CD8-positive, alpha-beta T cell (primary cell): ENCODE measurements at regions of chr10 and their contacts with region 1.

Region 1: GRCh38 chr10:68955832-68956532 is at the start of gene DDX21:
- DNase-seq: peak; percentile 68 to 95 (median 89)
- ATAC-seq: peak; percentile 75
- H3K4me3 ChIP-seq: peak within 1 kb of the TSS; percentile 85 to 96
- H3K4me3 Mint-ChIP-seq: peak within 1 kb of the TSS; percentile 100
- H3K27ac ChIP-seq: peak within 1 kb of the TSS; percentile 95 to 99
- H3K27ac Mint-ChIP-seq: peak within 1 kb of the TSS; percentile 100
- H3K4me1 ChIP-seq: peaks cover 21% of the 10 kb centered on the region
- H3K4me1 Mint-ChIP-seq: peaks cover 41% of the 10 kb centered on the region
- H3K27me3 ChIP-seq: no peaks in the 10 kb centered on the region
- H3K27me3 Mint-ChIP-seq: no peaks in the 10 kb centered on the region
- CTCF ChIP-seq: peak; percentile 71
- total RNA-seq, gene DDX21: 175 to 185 TPM

Region 2: DNA sequence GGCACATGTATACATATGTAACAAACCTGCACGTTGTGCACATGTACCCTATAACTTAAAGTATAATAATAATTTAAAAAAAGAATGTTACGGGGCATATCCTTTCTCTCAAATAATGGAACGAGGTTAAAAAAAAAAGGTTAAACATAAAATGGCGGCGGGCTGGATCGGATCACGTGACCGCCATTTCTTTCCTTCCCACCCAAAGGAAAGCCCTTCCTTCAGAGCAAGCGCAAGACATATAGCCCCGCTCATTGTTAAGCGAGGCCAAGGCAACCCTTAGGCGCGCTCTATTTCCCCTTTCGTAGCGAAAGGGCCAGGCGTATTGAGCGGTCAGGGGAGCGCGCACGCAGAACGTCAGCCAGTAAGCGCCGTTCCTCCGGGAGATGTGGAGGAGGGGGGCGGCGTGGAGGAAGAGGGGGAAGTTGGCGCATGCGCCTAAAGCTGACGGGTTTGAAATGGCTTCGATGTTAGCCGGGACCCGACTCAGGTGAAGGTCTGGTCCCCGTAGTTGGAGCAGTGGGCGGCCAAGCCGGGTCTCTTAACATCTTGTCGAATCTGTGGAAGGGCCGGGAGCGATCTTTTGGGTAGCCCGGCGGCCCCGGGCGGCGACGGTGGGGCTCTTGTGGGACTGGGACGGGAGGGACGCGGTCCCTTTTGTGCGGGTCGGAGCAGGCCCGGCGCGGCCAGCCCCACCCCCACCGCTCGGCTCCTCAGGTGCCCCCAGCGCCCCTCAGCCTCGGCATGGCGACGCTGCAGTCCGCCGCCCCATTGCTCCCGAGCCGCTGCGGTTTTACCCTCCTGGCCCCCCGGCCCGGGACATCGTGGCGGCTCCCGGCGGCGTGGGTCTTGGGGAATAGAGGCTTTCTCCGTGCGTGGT is 234.9 kb before region 1 on chr10 and contains the start of gene CCAR1:
- CTCF ChIA-PET with region 1: no interaction called
- POLR2A ChIA-PET with region 1: no interaction called
- intact Hi-C with region 1: loop called (anchors 1 to 2 kb)
- DNase-seq: peak; percentile 92 to 99 (median 97)
- ATAC-seq: peak; percentile 95
- H3K4me3 ChIP-seq: peak within 1 kb of the TSS; percentile 87 to 98
- H3K4me3 Mint-ChIP-seq: peak within 1 kb of the TSS; percentile 100
- H3K27ac ChIP-seq: peak within 1 kb of the TSS; percentile 83 to 95
- H3K27ac Mint-ChIP-seq: peak within 1 kb of the TSS; percentile 99
- H3K4me1 ChIP-seq: peaks cover 10% of the 10 kb centered on the region
- H3K4me1 Mint-ChIP-seq: peaks cover 20% of the 10 kb centered on the region
- H3K27me3 ChIP-seq: no peaks in the 10 kb centered on the region
- H3K27me3 Mint-ChIP-seq: no peaks in the 10 kb centered on the region
- CTCF ChIP-seq: no peak
- total RNA-seq, gene CCAR1: 70.8 to 79.1 TPM

Region 3: DNA sequence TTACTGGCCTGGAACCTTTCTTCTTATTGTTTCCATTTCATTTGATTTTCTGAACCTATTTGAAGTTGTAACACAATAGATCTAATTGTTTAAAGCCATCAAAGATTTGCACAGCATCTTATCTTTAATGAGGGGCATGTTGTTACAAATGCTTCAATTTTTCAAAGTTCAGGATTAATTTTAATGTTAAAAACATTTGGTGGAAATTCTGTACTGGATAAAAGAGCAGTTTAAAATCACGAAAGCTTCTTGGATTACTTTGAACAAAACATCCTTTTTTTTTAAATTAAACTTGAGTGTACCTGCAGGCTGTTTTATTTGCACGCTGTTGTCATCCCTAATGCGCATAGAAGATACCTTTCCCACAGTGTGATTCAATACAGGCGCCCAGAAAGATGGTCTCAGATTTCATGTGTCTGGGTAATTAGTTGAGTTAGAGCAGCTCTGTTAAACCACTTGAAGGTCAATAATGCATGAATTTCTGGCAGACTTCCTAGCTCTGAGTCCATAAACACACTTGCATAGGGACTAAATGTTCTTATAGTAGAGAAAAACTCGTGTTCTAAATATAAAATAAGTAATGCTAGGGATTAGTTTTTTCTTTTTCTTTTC is 84.1 kb before region 1 on chr10:
- CTCF ChIA-PET with region 1: no interaction called
- POLR2A ChIA-PET with region 1: no interaction called
- intact Hi-C with region 1: no loop called
- DNase-seq: no peak
- ATAC-seq: no peak
- H3K4me3 ChIP-seq: no peak overlapping the region
- H3K4me3 Mint-ChIP-seq: no peak overlapping the region
- H3K27ac ChIP-seq: no peak overlapping the region
- H3K27ac Mint-ChIP-seq: no peak overlapping the region
- H3K4me1 ChIP-seq: no peaks in the 10 kb centered on the region
- H3K4me1 Mint-ChIP-seq: peaks cover 5% of the 10 kb centered on the region
- H3K27me3 ChIP-seq: no peaks in the 10 kb centered on the region
- H3K27me3 Mint-ChIP-seq: no peaks in the 10 kb centered on the region
- CTCF ChIP-seq: no peak

Region 4: DNA sequence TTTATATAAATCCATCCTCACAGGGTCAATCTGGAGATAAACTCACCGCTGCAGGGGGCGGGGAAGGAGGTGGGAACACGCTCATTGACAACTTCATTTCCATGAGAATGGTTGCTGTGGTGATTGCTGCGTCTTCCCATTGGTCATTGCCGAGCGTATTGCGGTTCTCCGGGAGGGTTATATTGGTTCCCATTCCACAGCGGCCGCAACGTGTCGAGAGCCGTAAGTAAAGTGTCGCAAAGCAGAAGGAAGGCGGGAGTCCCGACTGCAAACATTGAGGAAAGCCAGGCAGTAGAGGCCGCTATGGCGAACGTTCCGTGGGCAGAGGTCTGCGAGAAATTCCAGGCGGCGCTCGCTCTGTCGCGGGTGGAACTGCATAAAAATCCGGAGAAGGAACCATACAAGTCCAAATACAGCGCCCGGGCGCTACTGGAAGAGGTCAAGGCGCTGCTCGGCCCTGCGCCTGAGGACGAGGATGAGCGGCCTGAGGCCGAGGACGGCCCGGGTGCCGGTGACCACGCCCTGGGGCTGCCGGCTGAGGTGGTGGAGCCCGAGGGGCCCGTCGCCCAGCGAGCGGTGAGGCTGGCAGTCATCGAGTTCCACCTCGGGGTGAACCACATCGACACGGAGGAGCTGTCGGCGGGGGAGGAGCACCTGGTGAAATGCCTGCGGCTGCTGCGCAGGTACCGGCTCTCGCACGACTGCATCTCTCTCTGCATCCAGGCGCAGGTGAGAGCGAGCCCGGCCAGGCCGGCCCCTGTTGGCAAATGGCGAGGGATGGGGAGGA is 32.7 kb after region 1 on chr10 and contains the start of gene KIFBP:
- CTCF ChIA-PET with region 1: no interaction called
- POLR2A ChIA-PET with region 1: interaction called, 6 read pairs
- intact Hi-C with region 1: loop called (anchors 2 kb)
- DNase-seq: peak; percentile 47 to 95 (median 79)
- ATAC-seq: peak; percentile 81
- H3K4me3 ChIP-seq: peak within 1 kb of the TSS; percentile 68 to 85
- H3K4me3 Mint-ChIP-seq: peak within 1 kb of the TSS; percentile 99
- H3K27ac ChIP-seq: peak within 1 kb of the TSS; percentile 31 to 79
- H3K27ac Mint-ChIP-seq: peak within 1 kb of the TSS; percentile 95
- H3K4me1 ChIP-seq: peaks cover 29% of the 10 kb centered on the region
- H3K4me1 Mint-ChIP-seq: peaks cover 56% of the 10 kb centered on the region
- H3K27me3 ChIP-seq: no peaks in the 10 kb centered on the region
- H3K27me3 Mint-ChIP-seq: no peaks in the 10 kb centered on the region
- CTCF ChIP-seq: peak; percentile 41
- total RNA-seq, gene KIFBP: 4.6 to 5.8 TPM

Region 5: GRCh38 chr10:69087590-69088470 is 131.8 kb after region 1 on chr10 and contains the start of gene SRGN:
- CTCF ChIA-PET with region 1: interaction called, 27 read pairs
- POLR2A ChIA-PET with region 1: interaction called, 12 read pairs
- intact Hi-C with region 1: loop called (anchors 1 kb)
- DNase-seq: peak; percentile 57 to 96 (median 76)
- ATAC-seq: peak; percentile 57
- H3K4me3 ChIP-seq: peak within 1 kb of the TSS; percentile 62 to 89
- H3K4me3 Mint-ChIP-seq: peak within 1 kb of the TSS; percentile 95
- H3K27ac ChIP-seq: peak within 1 kb of the TSS; percentile 97
- H3K27ac Mint-ChIP-seq: peak within 1 kb of the TSS; percentile 99
- H3K4me1 ChIP-seq: peaks cover 41% of the 10 kb centered on the region
- H3K4me1 Mint-ChIP-seq: peaks cover 57% of the 10 kb centered on the region
- H3K27me3 ChIP-seq: no peaks in the 10 kb centered on the region
- H3K27me3 Mint-ChIP-seq: no peaks in the 10 kb centered on the region
- CTCF ChIP-seq: no peak
- total RNA-seq, gene SRGN: 570 to 583 TPM

Region 6: DNA sequence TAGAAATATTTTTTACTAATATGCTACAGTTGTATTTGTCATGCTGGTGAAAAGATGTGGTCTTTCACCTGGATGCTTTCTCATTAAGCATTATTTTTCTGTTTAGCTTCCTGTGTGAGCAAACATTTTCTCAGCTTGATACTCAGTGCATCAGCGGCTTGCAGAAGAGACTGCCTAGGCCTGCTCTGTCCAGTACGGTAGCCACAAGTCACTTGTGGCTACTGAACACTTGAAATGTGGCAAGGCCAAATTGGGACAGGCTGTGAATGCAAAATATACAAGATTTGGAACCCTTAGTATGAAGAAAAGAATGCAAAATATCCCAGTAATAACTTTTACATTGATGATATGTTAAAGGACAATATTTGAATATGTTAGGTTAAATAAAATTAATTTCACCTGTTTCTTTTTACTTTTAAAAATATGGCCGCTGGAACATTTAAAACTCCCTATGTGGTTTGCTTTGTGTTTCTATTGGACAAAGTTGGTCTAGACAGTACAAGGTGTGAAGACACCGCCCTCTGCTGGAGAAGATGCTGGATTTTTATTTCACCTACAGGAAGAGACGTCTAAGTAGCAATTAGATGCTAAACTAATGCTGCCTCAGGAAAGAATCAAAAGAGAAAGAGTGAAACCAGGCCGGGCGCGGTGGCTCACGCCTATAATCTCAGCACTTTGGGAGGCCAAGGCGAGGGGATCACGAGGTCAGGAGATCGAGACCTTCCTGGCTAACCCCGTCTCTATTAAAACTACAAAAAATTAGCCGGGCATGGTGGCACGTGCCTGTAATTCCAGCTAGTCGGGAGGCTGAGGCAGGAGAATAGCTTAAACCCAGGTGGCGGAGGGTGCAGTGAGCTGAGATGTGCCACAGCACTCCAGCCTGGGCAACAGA is 137.2 kb after region 1 on chr10:
- CTCF ChIA-PET with region 1: interaction called, 27 read pairs
- POLR2A ChIA-PET with region 1: interaction called, 12 read pairs
- intact Hi-C with region 1: loop called (anchors 1 kb)
- DNase-seq: peak; percentile 66 to 93 (median 83)
- ATAC-seq: peak; percentile 21
- H3K4me3 ChIP-seq: no peak overlapping the region
- H3K4me3 Mint-ChIP-seq: peak overlapping the region; percentile 26
- H3K27ac ChIP-seq: peak overlapping the region in 1 of 2 experiments; percentile 68
- H3K27ac Mint-ChIP-seq: peak overlapping the region; percentile 93
- H3K4me1 ChIP-seq: peaks cover 47% of the 10 kb centered on the region
- H3K4me1 Mint-ChIP-seq: peaks cover 69% of the 10 kb centered on the region
- H3K27me3 ChIP-seq: no peaks in the 10 kb centered on the region
- H3K27me3 Mint-ChIP-seq: no peaks in the 10 kb centered on the region
- CTCF ChIP-seq: peak; percentile 76

Region 7: GRCh38 chr10:69179743-69180524 is 224.0 kb after region 1 on chr10 and contains the start of gene SUPV3L1:
- CTCF ChIA-PET with region 1: no interaction called
- POLR2A ChIA-PET with region 1: interaction called, 3 read pairs
- intact Hi-C with region 1: loop called (anchors 1 kb)
- DNase-seq: peak; percentile 71 to 96 (median 87)
- ATAC-seq: peak; percentile 70
- H3K4me3 ChIP-seq: peak within 1 kb of the TSS; percentile 88 to 90
- H3K4me3 Mint-ChIP-seq: peak within 1 kb of the TSS; percentile 91
- H3K27ac ChIP-seq: peak within 1 kb of the TSS; percentile 97 to 98
- H3K27ac Mint-ChIP-seq: peak within 1 kb of the TSS; percentile 99
- H3K4me1 ChIP-seq: peaks cover 24% of the 10 kb centered on the region
- H3K4me1 Mint-ChIP-seq: peaks cover 41% of the 10 kb centered on the region
- H3K27me3 ChIP-seq: no peaks in the 10 kb centered on the region
- H3K27me3 Mint-ChIP-seq: no peaks in the 10 kb centered on the region
- CTCF ChIP-seq: no peak
- total RNA-seq, gene SUPV3L1: 89.3 to 99.6 TPM